WTC11 (cell line): ENCODE measurements at regions of chr10 and their contacts with region 1.

Region 1: DNA sequence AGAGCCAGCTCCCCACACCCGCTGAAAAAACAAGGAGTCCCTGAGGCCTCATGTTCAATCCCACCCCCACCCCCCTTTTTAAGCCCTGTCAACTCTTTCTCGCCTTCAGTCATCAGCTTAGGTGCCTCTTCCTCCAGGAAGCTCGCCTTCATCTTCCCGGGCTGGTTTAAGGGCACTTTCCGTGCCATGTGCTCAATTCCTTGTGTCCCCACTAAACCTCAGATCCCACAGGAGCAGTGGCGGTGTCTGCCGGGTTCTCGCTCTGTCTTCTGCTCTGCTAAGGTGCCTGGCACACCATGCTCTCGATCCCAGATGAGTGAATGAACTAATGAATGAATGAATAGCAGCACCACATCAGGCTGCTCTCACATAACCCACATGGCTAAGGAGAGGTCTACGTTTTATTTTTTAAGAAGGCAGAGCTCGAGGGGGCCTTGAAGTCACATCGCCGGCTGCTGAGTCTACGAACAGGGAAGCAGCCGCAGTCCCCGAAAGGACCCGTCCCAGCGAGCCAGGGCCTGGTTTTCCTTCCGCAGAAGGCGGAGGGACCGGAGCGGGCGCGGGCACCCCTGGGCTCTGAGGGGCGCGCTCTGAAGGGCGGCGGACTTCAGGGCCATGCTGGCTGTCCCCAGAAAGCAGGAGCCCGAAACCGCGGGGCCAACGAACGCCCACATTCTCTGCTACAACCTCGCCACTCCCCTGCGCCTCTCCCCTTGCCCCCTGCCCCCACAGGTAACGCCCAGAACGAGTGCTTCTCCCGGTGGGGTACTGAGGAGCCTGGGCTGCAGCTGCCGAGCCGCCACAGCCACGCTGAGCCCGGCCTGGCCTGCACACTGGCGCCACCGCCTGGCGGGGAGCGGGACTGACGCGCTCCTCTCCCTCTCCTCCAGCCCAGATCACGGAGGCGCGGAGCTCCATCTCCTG is 73.4 kb upstream of the KCNMA1 start:
- DNase-seq: peak; percentile 90
- ATAC-seq: peak; percentile 85
- H3K4me3 Mint-ChIP-seq: peak overlapping the region; percentile 64
- H3K27ac Mint-ChIP-seq: no peak overlapping the region
- H3K4me1 Mint-ChIP-seq: peaks cover 35% of the 10 kb centered on the region
- H3K27me3 Mint-ChIP-seq: peaks cover 29% of the 10 kb centered on the region
- CTCF ChIP-seq: peak; percentile 96

Region 2: GRCh38 chr10:77173615-77174461 is 537.2 kb before region 1 on chr10:
- CTCF ChIA-PET with region 1: interaction called, 29 read pairs
- POLR2A ChIA-PET with region 1: no interaction called
- DNase-seq: peak; percentile 86
- ATAC-seq: peak; percentile 95
- H3K4me3 Mint-ChIP-seq: no peak overlapping the region
- H3K27ac Mint-ChIP-seq: no peak overlapping the region
- H3K4me1 Mint-ChIP-seq: no peaks in the 10 kb centered on the region
- H3K27me3 Mint-ChIP-seq: no peaks in the 10 kb centered on the region; the same call in 1 of the 2 replicates
- CTCF ChIP-seq: peak; percentile 86

Region 3: GRCh38 chr10:77555591-77556212 is 155.3 kb before region 1 on chr10:
- CTCF ChIA-PET with region 1: no interaction called
- POLR2A ChIA-PET with region 1: no interaction called
- DNase-seq: no peak
- ATAC-seq: no peak
- H3K4me3 Mint-ChIP-seq: no peak overlapping the region
- H3K27ac Mint-ChIP-seq: no peak overlapping the region
- H3K4me1 Mint-ChIP-seq: peaks cover 1% of the 10 kb centered on the region; the same call in 1 of the 2 replicates
- H3K27me3 Mint-ChIP-seq: no peaks in the 10 kb centered on the region
- CTCF ChIP-seq: no peak

Region 4: GRCh38 chr10:77641788-77642397 is 69.1 kb before region 1 on chr10:
- CTCF ChIA-PET with region 1: interaction called, 50 read pairs
- POLR2A ChIA-PET with region 1: no interaction called
- DNase-seq: peak; percentile 56
- ATAC-seq: no peak
- H3K4me3 Mint-ChIP-seq: no peak overlapping the region
- H3K27ac Mint-ChIP-seq: no peak overlapping the region
- H3K4me1 Mint-ChIP-seq: peaks cover 8% of the 10 kb centered on the region
- H3K27me3 Mint-ChIP-seq: peaks cover 45% of the 10 kb centered on the region
- CTCF ChIP-seq: peak; percentile 74

Region 5: DNA sequence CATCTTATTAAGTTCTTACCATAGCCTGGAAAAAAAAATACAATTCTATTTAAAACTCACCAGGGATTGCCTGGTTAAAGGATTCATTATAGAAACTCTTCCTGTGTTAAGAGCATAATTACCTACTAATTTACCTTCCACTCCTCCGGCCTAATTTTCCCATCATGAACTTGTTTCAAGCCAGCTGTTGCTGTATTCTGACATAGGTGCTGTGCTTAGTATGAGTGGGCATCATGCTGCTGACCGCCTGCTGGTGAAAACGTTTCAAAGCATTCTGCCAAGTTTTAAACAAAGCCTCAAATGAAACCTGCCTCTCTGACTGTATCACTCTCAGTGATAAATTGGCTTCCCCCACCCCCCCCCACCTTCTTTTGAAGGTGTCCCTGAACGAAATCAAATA is 25.6 kb before region 1 on chr10:
- CTCF ChIA-PET with region 1: interaction called, 62 read pairs
- POLR2A ChIA-PET with region 1: no interaction called
- DNase-seq: no peak
- ATAC-seq: no peak
- H3K4me3 Mint-ChIP-seq: no peak overlapping the region
- H3K27ac Mint-ChIP-seq: no peak overlapping the region
- H3K4me1 Mint-ChIP-seq: peaks cover 31% of the 10 kb centered on the region
- H3K27me3 Mint-ChIP-seq: no peaks in the 10 kb centered on the region
- CTCF ChIP-seq: no peak

Region 6: DNA sequence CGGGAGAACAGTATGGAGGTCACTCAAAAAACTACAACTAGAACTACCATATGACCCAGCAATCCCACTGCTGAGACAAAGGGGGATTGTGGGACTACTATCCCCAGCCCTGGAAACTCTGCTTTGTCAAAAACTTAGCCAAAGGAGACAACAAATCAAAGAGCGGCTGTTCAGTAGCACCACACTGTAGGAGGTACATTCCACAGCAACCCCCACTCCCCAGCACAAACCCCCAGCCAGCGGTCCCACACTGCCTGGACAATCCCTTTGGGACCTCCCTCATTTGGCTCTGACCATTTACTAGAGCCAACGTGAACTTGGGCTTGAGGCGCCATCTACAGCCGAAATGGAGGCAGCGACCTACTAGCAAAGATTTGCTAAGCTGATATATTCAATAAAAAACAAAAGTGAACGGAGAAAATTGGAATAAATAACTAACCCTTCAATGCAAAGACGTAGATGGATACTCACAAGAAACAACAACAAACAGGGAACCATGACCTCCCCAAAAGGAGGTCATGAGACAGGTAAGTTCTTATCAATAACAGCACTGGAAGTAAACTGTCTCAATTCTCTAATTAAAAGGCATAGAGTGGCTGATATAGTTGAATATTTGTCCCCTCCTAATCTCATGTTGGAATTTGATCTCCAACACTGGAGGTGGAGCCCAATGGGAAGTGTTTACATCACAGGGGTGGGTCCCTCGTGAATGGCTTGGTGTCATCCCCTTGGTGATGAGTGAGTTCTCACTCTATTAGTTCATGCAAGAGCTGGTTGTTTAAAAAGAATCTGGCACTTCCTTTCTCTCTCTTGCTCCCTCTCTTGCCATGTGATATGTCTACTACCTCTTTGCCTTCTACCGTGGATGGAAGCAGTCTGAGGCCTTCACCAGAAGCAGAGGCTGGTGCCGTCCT is 45.6 kb after region 1 on chr10:
- CTCF ChIA-PET with region 1: interaction called, 44 read pairs
- POLR2A ChIA-PET with region 1: no interaction called
- DNase-seq: peak; percentile 83
- ATAC-seq: peak; percentile 100
- H3K4me3 Mint-ChIP-seq: peak overlapping the region; percentile 36
- H3K27ac Mint-ChIP-seq: 0 out of 2 replicates have a peak overlapping the region, but pooled peaks have one; percentile 71
- H3K4me1 Mint-ChIP-seq: peaks cover 10% of the 10 kb centered on the region
- H3K27me3 Mint-ChIP-seq: no peaks in the 10 kb centered on the region
- CTCF ChIP-seq: peak; percentile 49

Region 7: GRCh38 chr10:77873536-77874380 is 162.7 kb after region 1 on chr10:
- CTCF ChIA-PET with region 1: no interaction called
- POLR2A ChIA-PET with region 1: no interaction called
- DNase-seq: no peak
- ATAC-seq: no peak
- H3K4me3 Mint-ChIP-seq: no peak overlapping the region
- H3K27ac Mint-ChIP-seq: peak overlapping the region; percentile 90
- H3K4me1 Mint-ChIP-seq: peaks cover 69% of the 10 kb centered on the region
- H3K27me3 Mint-ChIP-seq: no peaks in the 10 kb centered on the region
- CTCF ChIP-seq: no peak

Region 8: DNA sequence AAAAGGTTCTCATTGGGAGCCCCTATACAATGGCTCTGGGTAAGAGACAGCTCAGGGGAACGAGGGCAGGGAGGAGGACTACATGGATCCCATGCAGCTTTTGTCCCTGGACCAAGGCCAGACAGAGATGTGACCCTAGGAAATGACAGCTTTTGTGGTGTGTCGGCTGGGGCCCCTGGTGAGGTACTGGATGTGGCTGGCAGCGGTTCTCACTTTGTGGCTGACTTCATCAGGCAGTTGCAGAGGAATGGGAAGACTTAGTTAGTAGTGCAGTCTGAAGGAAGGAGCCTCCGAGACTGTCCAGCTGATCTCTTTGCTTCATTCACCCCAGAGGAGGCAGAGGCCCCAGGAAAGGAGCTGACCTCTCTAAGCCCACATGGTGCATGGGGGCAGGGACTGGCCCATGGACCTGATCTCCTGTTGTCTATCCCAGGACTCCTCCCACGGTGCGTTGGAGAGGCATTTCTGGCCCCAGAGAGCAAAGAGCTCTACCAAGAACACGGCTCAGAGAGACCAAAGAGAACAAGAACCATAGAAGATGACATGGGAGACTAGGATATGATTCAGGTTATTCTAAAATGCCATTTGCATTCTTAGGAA is 525.5 kb after region 1 on chr10:
- CTCF ChIA-PET with region 1: no interaction called
- POLR2A ChIA-PET with region 1: no interaction called
- DNase-seq: no peak
- ATAC-seq: no peak
- H3K4me3 Mint-ChIP-seq: no peak overlapping the region
- H3K27ac Mint-ChIP-seq: no peak overlapping the region
- H3K4me1 Mint-ChIP-seq: no peaks in the 10 kb centered on the region
- H3K27me3 Mint-ChIP-seq: no peaks in the 10 kb centered on the region
- CTCF ChIP-seq: no peak